Spleen (tissue), 13 donors: ENCODE measurements at regions of chr1 and their contacts with region 1.

Region 1: DNA sequence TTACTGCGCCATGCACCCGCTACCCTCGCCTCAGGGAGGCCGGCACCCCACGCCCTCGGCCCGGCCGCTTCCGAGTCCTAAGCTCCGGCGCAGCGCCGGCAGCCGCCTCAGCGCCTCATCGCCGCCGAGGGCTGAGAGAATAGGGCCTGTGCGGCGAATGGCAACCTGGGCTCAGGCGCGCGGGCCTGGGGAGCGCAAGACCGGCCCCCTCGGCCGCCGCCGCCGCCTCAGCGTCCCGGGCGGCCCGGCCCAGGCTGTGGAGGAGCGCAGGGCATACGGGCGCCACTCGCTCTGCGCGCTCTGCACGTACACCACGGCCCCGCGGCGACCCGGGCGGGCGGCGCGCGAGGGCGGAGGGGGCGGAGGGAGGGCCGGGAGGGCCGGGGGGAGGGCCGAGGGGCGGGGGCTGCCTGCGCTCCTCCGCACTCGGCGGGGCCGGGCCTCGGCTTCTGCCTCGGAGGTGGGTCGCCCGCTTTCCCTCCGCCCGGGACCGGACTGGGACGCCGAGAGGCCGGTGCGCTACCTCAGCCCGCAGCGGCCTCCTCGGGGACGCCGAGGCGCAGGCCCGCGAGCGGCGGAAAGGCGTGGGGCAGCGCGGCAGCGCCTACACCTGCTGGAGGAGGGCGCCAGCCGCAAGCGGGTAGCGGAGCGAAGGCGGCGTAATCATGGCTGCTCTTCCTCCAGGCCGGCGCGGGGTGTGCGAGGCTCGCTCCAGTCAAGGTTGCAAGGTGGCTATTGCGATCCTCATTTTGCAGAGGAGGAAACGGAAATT is at the start of gene EGLN1:
- DNase-seq: peak; percentile 97
- H3K4me3 ChIP-seq: peak within 1 kb of the TSS; percentile 67 to 95 (median 84)
- H3K27ac ChIP-seq: peak within 1 kb of the TSS; percentile 92 to 100 (median 98)
- H3K4me1 ChIP-seq: peaks cover 21 to 52% (median 40%) of the 10 kb centered on the region in 6 donors
- H3K27me3 ChIP-seq: no peaks in the 10 kb centered on the region
- CTCF ChIP-seq: peak in 8 of 11 experiments; percentile 5 to 63 (median 38)
- POLR2A ChIP-seq: peak; percentile 33 to 68 (median 68)
- total RNA-seq, gene EGLN1: 30.2 to 44.0 (median 39.9) TPM

Region 2: DNA sequence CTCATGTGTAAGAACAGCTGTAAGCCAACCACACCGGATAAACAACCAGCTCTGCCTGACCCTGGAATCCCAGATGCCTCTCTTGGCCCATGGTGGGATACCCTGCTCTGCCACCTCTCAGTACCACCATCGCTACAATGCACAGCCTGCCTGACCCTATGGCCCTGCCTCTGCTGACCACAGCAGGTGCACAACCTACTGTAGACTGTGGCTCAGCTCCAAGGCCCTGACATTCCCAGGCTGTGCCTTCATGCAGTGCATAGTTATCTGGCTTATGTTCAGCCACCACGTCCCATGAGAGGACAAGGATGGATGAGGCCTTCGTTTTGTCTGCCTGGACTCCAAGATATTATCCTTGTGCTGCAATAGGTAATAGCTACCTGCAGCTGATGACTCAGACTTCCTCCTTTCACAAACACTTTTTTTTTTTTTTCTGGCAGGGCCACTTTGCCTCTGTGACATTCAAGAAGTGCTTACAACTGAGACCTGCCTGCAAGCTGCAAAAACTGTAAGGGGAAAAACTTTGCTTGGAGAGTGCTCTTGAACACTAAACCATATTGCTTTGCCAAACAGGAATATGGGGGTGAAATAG is 1618.5 kb before region 1 on chr1:
- intact Hi-C with region 1: no loop called
- DNase-seq: no peak
- H3K4me3 ChIP-seq: no peak overlapping the region
- H3K27ac ChIP-seq: no peak overlapping the region
- H3K4me1 ChIP-seq: no peaks in the 10 kb centered on the region
- H3K27me3 ChIP-seq: peaks cover 0 to 6% (median 0%) of the 10 kb centered on the region in 7 donors
- CTCF ChIP-seq: no peak
- POLR2A ChIP-seq: no peak

Region 3: GRCh38 chr1:231369282-231369681 is 52.9 kb before region 1 on chr1:
- intact Hi-C with region 1: loop called (anchors 10 kb)
- DNase-seq: no peak
- H3K4me3 ChIP-seq: no peak overlapping the region
- H3K27ac ChIP-seq: no peak overlapping the region
- H3K4me1 ChIP-seq: no peaks in the 10 kb centered on the region
- H3K27me3 ChIP-seq: no peaks in the 10 kb centered on the region
- CTCF ChIP-seq: no peak
- POLR2A ChIP-seq: no peak

Region 4: DNA sequence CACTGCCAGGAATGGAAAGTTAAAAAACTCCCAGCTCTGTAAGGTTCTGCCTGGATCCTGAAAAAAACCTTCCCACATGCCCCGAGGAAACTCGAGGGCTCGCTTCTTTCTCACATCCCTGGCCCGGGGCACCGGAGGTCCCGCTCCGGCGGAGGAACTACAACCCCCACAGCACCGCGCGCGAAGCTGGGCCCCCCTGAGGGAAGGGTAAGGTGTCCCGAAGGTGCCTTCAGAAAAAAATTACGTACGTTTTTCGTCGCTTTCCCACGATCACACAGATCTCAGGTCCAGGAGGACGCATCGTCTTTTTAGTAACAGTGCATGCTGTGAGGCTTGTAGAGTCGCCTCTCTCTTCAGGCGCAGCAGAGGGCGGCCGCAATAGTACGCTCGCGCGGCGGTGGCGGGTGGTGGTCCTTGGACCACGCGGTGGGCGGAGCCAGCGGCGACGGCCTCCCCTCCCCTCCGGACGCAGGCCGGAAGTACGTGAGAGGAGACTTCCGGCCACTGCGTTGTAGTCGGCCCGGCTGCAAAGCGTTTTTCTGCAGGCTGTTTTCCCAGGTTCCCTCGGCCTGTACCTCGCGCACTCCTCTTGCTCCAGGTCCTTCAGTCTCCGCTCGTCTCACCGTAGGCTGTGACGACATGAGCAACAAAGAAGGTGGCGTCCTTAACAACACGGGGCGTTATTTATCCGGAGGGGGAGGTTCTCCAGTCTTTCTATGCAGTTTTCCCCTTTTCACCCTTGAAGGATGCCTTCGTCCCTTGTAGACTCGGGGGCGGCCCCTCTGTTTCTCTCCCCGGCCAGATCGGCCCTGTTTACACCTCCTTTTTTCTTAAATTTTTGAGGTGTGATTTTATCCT is 106.2 kb after region 1 on chr1 and contains the start of gene TSNAX:
- intact Hi-C with region 1: loop called (anchors 10 kb)
- DNase-seq: peak; percentile 98
- H3K4me3 ChIP-seq: peak within 1 kb of the TSS; percentile 54 to 91 (median 70)
- H3K27ac ChIP-seq: peak within 1 kb of the TSS; percentile 91 to 98 (median 92)
- H3K4me1 ChIP-seq: peaks cover 26 to 68% (median 55%) of the 10 kb centered on the region in 6 donors
- H3K27me3 ChIP-seq: no peaks in the 10 kb centered on the region
- CTCF ChIP-seq: peak in 4 of 11 experiments; percentile 4 to 31 (median 18)
- POLR2A ChIP-seq: peak in 2 of 3 donors; percentile 66 to 77
- total RNA-seq, gene TSNAX: 46.6 to 61.8 (median 48.3) TPM

Region 5: GRCh38 chr1:231584921-231585320 is 162.7 kb after region 1 on chr1:
- intact Hi-C with region 1: loop called (anchors 5 kb)
- DNase-seq: no peak
- H3K4me3 ChIP-seq: no peak overlapping the region
- H3K27ac ChIP-seq: no peak overlapping the region
- H3K4me1 ChIP-seq: peaks cover 0 to 7% (median 0%) of the 10 kb centered on the region in 6 donors
- H3K27me3 ChIP-seq: no peaks in the 10 kb centered on the region
- CTCF ChIP-seq: no peak
- POLR2A ChIP-seq: no peak